ENCODE measurements at regions of chr10 and their contacts with region 1.

Region 1: DNA sequence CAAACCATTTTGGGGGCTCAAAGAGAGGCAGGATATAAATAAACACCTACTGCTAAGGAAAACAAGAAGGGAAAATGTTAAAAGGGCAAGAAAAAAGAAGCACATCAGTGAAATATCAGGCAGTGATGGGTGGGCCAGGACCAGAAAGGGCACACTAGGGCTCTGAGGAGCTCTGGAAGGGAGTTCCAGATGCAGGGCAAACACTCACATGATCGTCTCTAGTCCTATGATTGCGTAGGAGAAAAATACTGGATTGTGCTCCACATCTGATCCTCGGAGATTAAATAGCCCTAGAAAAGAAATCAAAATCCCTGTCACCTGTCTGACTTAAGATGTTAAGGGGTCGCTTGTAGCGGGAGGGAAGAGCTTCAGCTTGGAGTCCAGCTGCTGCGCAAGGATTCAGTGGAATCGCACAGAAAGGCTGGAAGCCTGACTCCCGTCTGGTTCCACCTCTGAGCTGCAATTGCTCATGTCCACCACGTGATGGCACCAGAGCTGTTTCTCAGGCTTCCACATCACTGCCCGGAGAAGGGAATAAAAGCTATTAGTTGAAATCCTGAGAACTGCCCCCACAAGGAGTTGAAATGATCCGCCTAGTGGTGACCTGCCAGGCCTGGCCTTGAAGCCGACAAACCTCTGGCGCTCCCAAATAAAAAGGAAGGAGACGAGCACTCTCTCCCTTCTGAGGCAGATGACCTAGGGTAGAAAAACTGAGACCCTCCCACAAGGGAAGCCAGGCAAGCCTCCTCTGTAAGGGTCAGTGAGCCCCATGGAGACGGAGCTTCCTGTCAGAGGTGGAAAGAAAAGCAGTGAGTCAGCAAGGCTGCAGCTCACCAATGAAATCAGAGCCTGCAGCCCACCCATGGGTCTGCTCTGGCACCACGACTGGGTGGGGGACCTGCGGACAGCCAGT is 39.2 kb downstream of the XPNPEP1 start:
- DNase-seq: peak; percentile 76
- ATAC-seq: peak; percentile 88

Region 2: DNA sequence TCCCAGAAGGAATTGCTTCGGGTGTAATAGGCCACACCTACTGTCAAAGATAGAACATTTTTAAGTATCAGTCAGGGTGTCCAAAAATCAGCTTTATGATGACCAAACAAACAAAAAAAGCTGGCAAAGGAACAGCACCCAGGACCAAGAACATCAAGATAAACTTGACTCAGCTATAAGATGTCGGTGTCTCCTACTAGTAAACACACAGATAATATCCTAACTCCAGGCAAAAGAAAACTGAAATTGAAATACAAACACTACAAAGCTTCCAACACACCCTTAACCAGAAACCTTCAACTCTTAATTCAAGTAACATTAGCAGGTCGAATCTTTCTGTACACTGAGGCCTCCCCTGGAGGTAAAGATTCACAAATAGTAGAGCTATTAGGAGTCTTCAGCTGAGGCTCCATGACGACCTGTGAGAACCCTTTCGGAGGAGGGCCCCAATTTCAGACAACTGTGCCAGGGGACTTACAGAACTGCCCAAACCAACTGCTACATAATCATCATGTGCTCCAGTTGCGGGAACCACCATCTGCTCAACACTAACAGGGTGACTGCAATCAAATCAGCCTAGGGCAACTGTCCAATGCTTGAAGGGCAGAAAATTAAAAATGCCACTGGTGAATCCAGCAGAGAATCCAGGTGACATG is 18.9 kb after region 1 on chr10:
- intact Hi-C with region 1: no loop called
- DNase-seq: no peak
- ATAC-seq: no peak

Region 3: GRCh38 chr10:109922976-109923921 is 39.1 kb after region 1 on chr10 and contains the start of gene XPNPEP1:
- intact Hi-C with region 1: loop called (anchors 2 kb)
- DNase-seq: peak; percentile 96
- ATAC-seq: peak; percentile 98
- total RNA-seq, gene XPNPEP1: 43.6 TPM

Region 4: DNA sequence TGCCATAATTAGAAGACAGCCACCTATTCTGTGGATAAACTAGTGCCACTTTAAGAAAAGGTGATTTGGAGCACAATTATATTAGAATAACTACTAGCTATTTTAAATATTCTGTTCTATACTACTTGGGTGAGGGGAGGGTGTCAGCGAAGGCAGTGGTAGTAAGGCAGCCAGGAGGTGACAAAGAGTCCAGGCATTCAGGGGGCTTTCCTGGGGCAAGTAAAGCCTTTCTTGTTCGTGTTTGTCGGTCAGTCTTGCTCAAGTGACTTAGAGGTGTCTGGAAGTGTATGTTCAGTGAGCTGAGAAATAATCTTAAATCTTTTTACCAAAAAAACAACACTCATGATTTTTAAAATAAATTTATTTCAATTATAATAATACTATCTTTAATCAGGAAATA is 158.1 kb after region 1 on chr10:
- intact Hi-C with region 1: no loop called
- DNase-seq: no peak
- ATAC-seq: no peak

Region 5: GRCh38 chr10:110279407-110279986 is 395.4 kb after region 1 on chr10:
- intact Hi-C with region 1: loop called (anchors 5 kb)
- DNase-seq: no peak
- ATAC-seq: peak; percentile 76

Measured in Right ventricle myocardium inferior (tissue), 1 donor.